ENCODE measurements at regions of chr7 and their contacts with region 1.

Region 1: DNA sequence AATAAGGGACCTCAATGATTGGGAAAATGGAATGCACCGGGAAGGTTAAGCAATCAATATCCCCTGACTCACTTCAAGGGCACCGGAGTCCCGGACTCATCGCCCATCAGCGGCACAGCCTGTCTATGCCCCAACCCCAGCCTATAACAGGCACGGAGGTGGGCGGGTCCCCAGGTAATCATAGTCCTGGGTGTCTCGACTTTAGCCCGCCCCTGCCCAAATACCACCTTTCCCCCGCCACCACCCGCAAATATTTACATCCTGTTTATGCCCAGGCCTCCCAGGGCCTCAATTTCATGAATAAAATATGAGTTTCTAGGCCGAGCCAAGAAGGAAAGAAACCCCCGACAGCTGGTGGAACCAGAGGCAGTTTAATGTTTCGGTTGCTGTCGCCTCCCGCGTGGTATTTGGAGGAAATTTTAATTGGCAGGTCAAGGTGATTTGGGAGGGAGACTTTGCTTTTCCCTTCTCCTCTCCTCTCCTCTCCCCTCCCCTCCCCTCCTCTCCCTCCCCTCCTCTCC is 15.6 kb upstream of the RFC2 start:
- DNase-seq: no peak
- H3K4me3 ChIP-seq: peak overlapping the region; percentile 51
- H3K27ac ChIP-seq: peak overlapping the region; percentile 39
- H3K27me3 ChIP-seq: no peaks in the 10 kb centered on the region
- CTCF ChIP-seq: no peak

Region 2: DNA sequence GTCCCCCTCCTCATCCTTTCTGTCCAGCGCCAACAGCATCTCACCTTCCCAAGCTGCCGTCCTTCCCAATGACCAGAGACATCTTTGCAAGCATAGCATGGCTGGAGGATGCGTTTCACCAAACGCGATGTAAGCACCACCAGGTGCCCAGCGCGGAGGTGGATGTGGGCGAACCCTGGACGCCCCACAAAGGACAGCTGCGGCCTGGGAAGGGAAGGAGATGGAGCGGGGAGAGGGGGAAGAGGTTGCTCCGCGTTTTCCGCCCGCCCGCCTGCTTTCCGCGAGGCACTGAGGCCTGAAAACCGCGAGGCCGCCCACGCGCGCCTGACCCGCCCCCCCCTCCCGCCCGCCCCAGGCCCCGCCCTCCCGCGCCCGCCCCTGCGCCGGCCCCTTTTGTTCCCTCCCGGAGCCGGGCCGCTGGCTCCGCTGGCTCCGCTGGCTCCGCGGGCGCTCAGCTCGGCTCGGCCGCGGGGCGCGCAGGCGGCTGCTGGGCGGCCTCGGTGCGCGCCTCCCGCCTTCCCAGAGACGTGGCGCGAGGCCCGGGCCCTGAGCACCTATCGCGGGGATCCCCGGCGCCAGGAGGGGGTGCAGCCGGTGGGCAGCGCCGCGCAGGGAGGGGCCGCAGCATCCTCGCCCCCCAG is 19.3 kb after region 1 on chr7 and contains the start of gene CLIP2:
- CTCF ChIA-PET with region 1: interaction called, 3 read pairs
- POLR2A ChIA-PET with region 1: interaction called, 13 read pairs
- DNase-seq: no peak
- H3K4me3 ChIP-seq: peak within 1 kb of the TSS; percentile 87
- H3K27ac ChIP-seq: peak within 1 kb of the TSS; percentile 39
- H3K27me3 ChIP-seq: no peaks in the 10 kb centered on the region
- CTCF ChIP-seq: no peak
- polyA plus RNA-seq, gene CLIP2: 7.2 and 11.9 TPM in 2 replicates